Panc1 (cell line): ENCODE measurements at regions of chr9 and their contacts with region 1.

Region 1: DNA sequence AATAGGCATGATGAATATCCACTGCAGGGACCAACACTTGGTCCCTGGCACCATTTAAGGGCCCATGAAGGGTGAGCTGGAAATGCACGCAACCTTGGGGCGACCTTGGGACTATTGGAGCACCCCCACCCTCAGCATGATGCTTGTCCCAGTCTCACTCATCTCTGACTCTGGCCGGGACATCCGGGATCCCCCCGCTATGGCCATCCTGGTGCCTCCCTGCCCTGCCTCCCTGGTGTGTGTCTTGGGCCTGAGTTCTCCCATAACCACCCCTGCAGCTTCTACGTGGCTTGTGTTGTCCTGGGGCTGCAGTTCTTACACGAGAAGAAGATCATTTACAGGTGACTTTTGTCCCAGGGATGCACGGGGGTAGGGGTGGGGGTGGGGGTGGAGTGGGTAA is 5.9 kb downstream of the ZDHHC12 start:
- DNase-seq: no peak
- ATAC-seq: no peak
- H3K4me3 ChIP-seq: no peak overlapping the region
- H3K27ac ChIP-seq: no peak overlapping the region
- H3K4me1 ChIP-seq: peaks cover 3% of the 10 kb centered on the region
- H3K27me3 ChIP-seq: no peaks in the 10 kb centered on the region
- CTCF ChIP-seq: no peak

Region 2: DNA sequence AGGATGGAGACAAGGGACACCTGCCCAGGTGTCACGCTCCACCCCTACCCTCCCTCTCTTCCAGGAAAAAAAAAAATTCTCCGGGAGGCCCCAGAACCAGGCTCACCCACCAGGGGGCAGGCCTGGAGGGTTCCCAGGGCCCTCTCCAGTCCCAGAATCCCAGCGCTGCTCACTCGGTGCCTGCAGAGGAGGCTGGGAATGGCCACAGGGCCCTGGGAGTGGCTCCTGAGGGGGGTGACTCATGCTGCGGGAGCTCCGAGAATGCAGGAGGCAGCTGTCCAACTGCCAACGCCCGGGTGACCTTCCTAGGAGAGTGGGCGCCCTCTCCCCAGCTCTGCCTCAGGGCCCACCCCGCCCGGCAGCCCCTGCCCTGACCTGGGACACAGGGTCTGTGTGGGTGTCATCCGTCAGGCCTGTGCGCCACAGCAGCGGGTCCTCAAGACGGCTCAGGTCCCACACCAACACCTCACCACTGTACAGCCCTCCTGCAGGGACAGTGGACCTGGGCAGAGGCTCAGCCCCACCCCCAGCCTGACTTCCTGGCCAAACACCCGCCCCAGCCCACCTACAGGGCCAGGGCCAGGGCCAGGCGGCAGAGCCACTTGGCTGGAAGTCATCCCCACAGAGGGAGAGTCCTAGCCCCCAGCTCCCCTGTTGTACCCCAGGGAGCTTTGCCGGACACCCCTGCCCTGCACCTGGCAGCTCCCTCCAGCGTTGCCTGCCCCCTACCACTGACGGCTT is 82.6 kb before region 1 on chr9:
- CTCF ChIA-PET with region 1: no interaction called
- POLR2A ChIA-PET with region 1: no interaction called
- in situ Hi-C with region 1: no loop called
- intact Hi-C with region 1: no loop called
- DNase-seq: peak; percentile 66
- ATAC-seq: peak; percentile 90
- H3K4me3 ChIP-seq: peak overlapping the region in 1 of 2 experiments; percentile 11; a peak in 1 of 4 replicates
- H3K27ac ChIP-seq: peak overlapping the region; percentile 81
- H3K4me1 ChIP-seq: peaks cover 32% of the 10 kb centered on the region
- H3K27me3 ChIP-seq: no peaks in the 10 kb centered on the region
- CTCF ChIP-seq: peak; percentile 27

Region 3: GRCh38 chr9:128705051-128705905 is 12.8 kb before region 1 on chr9:
- CTCF ChIA-PET with region 1: interaction called, 11 read pairs
- POLR2A ChIA-PET with region 1: no interaction called
- in situ Hi-C with region 1: no loop called
- intact Hi-C with region 1: no loop called
- DNase-seq: no peak
- ATAC-seq: no peak
- H3K4me3 ChIP-seq: no peak overlapping the region
- H3K27ac ChIP-seq: no peak overlapping the region
- H3K4me1 ChIP-seq: peaks cover 3% of the 10 kb centered on the region; the same call in 1 of the 2 replicates
- H3K27me3 ChIP-seq: no peaks in the 10 kb centered on the region
- CTCF ChIP-seq: no peak

Region 4: DNA sequence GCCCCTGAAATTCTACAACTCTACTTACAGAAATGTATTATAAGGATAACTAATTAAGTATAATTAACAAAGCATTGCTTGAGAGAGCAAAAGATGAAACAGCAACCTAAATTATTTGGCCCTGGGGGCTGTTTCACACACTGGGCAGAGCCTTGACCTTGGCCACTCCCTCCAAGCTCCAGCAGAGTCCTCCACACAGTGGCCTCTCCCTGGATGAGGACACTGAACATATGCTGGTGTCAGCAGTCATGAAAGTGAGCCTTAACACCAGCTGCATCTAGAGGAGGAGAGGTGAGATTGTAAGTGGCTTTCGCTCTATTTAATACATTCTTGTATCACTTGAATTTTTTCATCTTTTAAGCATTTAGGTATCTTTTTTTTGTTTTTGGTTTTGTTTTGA is 29.2 kb after region 1 on chr9:
- CTCF ChIA-PET with region 1: no interaction called
- POLR2A ChIA-PET with region 1: no interaction called
- in situ Hi-C with region 1: no loop called
- intact Hi-C with region 1: no loop called
- DNase-seq: no peak
- ATAC-seq: no peak
- H3K4me3 ChIP-seq: no peak overlapping the region
- H3K27ac ChIP-seq: no peak overlapping the region
- H3K4me1 ChIP-seq: no peaks in the 10 kb centered on the region
- H3K27me3 ChIP-seq: no peaks in the 10 kb centered on the region
- CTCF ChIP-seq: no peak

Region 5: GRCh38 chr9:128818099-128818838 is 100.2 kb after region 1 on chr9 and contains the start of gene ENDOG:
- CTCF ChIA-PET with region 1: interaction called, 8 read pairs
- POLR2A ChIA-PET with region 1: interaction called, 10 read pairs
- in situ Hi-C with region 1: no loop called
- intact Hi-C with region 1: no loop called
- DNase-seq: peak; percentile 87
- ATAC-seq: peak; percentile 89
- H3K4me3 ChIP-seq: peak within 1 kb of the TSS; percentile 53 to 56
- H3K27ac ChIP-seq: peak within 1 kb of the TSS; percentile 72
- H3K4me1 ChIP-seq: peaks cover 3% of the 10 kb centered on the region; the same call in 1 of the 2 replicates
- H3K27me3 ChIP-seq: no peaks in the 10 kb centered on the region
- CTCF ChIP-seq: peak; percentile 89
- total RNA-seq, gene ENDOG: 39.9 TPM

Region 6: GRCh38 chr9:128823903-128824406 is 105.9 kb after region 1 on chr9:
- CTCF ChIA-PET with region 1: no interaction called
- POLR2A ChIA-PET with region 1: interaction called, 11 read pairs
- in situ Hi-C with region 1: no loop called
- intact Hi-C with region 1: no loop called
- DNase-seq: no peak
- ATAC-seq: no peak
- H3K4me3 ChIP-seq: no peak overlapping the region
- H3K27ac ChIP-seq: no peak overlapping the region
- H3K4me1 ChIP-seq: peaks cover 7% of the 10 kb centered on the region; the same call in 1 of the 2 replicates
- H3K27me3 ChIP-seq: no peaks in the 10 kb centered on the region
- CTCF ChIP-seq: no peak